ENCODE measurements at regions of chr2 and their contacts with region 1.

Region 1: DNA sequence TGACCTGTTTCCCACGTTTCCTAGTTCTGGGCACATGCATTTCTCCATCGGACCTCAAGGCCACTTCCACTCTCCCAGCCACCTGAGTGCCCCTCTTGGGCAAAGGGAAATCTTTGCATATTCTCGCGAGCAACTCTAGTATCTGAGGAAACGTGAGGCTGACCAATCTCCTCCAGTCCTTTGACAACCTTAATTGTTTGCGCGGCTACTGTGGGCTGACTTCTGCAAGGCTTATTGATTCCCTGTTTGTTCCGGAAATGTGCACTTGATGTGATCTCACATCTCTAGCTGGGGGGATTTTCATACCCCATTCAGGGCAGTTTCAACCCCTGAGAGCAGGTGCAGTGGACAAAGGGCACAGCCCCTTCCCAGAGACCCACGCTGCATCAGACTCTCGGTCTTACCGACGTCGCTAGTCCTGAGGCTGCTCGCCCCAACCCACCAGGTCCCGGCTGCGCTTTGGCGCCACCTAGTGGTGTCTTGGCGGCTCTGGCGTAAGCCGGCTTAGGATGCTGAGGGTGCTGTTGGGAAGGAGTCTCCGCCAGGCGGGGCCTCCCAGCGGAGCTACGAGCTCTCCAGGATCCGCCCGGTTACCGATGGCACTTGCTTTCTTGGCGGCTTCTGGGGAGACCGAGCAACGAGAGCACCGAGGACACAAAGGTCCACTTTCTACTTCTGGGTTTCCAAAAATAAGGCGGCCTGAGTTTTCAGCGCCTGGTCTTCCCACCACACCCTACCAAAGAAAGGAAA is 24.8 kb upstream of the SPR start:
- DNase-seq: peak; percentile 91 to 95 (median 93)
- H3K4me3 ChIP-seq: peak overlapping the region in 1 of 3 donors; percentile 32
- H3K27ac ChIP-seq: no peak overlapping the region
- H3K4me1 ChIP-seq: peaks cover 0 to 3% (median 0%) of the 10 kb centered on the region in 3 donors
- H3K27me3 ChIP-seq: peaks cover 11% of the 10 kb centered on the region
- CTCF ChIP-seq: peak; percentile 97

Region 2: GRCh38 chr2:72572501-72572900 is 289.9 kb before region 1 on chr2:
- intact Hi-C with region 1: no loop called
- DNase-seq: no peak
- H3K4me3 ChIP-seq: no peak overlapping the region
- H3K27ac ChIP-seq: no peak overlapping the region
- H3K4me1 ChIP-seq: no peaks in the 10 kb centered on the region
- H3K27me3 ChIP-seq: no peaks in the 10 kb centered on the region
- CTCF ChIP-seq: no peak

Region 3: DNA sequence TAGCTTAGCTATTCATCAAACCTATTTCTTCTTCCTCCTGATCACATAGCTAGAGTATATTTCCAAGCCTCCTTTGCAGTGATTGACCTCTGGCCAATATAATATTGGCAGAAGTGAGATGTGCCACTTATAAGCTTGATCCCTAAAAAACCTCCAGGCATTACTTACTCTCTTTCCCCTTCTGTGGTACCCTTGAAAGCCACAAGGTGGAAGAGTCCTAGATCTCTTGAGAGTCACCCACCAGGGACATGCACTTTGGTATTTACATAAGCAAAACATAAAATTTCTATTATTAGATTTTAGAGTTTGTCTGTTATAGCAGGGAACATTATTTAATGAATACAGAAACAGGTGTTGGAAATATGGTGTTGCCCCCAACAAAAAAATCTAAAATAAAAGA is 148.6 kb before region 1 on chr2:
- intact Hi-C with region 1: no loop called
- DNase-seq: no peak
- H3K4me3 ChIP-seq: no peak overlapping the region
- H3K27ac ChIP-seq: no peak overlapping the region
- H3K4me1 ChIP-seq: no peaks in the 10 kb centered on the region
- H3K27me3 ChIP-seq: no peaks in the 10 kb centered on the region
- CTCF ChIP-seq: no peak

Region 4: DNA sequence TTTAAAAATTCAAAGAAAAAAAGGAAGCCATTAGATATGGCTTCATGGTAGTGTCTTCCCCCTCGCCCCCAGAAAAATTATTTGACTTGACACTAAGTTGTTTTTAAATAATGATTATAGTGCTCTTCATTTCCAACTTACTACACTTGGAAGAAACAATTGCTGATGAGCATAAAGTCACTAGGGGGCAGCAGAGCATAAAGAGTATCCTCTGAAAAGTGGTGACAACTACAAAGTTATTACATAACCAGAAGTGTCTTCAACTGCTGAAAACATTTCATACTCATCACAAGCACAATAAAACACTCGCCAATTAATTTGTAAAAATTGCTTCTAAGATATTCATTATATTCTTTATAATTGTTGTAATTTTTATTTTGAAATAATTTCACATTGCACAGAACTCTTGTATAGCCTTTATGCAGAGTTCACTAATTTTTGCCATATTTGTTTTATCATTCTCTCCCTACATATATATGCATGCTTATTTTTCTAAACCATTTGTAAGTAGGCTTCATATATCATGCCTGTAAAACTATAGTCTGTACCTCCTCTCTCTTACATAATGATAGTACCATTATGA is 91.4 kb before region 1 on chr2:
- intact Hi-C with region 1: loop called (anchors 5 kb)
- DNase-seq: peak in 3 of 5 donors; percentile 42 to 88 (median 80)
- H3K4me3 ChIP-seq: no peak overlapping the region
- H3K27ac ChIP-seq: no peak overlapping the region
- H3K4me1 ChIP-seq: no peaks in the 10 kb centered on the region
- H3K27me3 ChIP-seq: no peaks in the 10 kb centered on the region
- CTCF ChIP-seq: peak; percentile 92